ENCODE measurements at regions of chr10 and their contacts with region 1.

Region 1: DNA sequence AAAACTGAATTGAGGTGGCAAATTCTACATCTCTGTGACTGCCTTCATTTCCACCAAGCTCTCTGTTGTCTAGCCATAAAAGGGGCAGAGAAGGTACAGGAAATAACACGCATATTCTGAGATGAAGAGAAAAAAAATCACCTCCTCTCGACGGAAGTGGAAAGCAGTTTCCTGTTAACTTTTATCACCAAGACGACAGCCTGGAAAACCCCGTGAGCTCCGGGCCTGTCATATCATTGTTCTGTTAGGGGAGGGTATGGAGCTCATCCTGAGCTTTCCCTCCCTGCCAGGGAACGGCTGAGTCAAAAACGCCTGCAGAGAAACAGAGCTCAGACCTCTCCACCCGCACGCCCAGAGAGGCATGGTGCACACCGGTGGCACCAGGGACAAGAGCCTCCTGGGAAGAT is 200.3 kb downstream of the PRPF18 start:
- DNase-seq: peak; percentile 87 to 94 (median 91)
- H3K4me3 ChIP-seq: peak overlapping the region in 1 of 2 donors; percentile 32
- H3K4me3 Mint-ChIP-seq: peak overlapping the region; percentile 65 to 91 (median 81)
- H3K27ac ChIP-seq: peak overlapping the region; percentile 91
- H3K27ac Mint-ChIP-seq: no peak overlapping the region
- H3K4me1 ChIP-seq: peaks cover 51% of the 10 kb centered on the region
- H3K4me1 Mint-ChIP-seq: peaks cover 10 to 34% (median 25%) of the 10 kb centered on the region in 4 donors
- H3K27me3 ChIP-seq: no peaks in the 10 kb centered on the region
- H3K27me3 Mint-ChIP-seq: no peaks in the 10 kb centered on the region

Region 2: DNA sequence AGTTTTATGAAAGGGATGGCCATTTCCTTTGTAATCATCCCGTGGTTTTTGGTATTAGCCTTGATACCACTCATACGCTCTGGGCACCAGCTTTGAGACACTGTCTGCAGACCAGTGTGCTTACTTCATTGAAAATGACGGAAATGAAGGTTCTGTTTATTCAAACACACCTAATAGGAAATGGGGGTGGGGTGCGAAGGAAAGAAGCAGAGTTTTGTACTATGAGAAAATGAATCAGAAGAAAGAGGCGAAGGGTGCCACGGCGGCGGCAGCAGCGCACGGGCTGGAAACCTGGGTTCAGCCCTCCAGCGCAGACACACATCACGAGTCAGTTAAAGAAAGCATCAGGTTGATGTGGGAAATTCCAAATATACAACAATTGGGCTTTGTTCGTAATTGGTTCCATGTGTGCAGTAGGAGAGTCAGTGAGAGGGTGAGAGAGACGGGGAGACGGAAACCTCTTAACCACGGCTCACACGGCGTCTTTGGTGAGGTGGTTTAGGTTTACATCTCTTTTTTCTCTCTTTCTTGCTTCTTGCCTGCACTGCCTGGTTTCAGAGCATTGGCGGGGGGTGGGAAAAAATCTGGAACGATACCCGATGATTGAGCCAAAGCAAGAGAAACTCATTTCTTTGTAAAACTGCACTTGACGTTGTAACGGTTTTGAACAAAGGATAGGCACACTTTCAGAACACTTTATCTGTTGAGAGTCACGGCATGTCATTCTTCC is 222.5 kb after region 1 on chr10:
- CTCF ChIA-PET with region 1: interaction called, 4 read pairs
- POLR2A ChIA-PET with region 1: interaction called, 16 read pairs
- intact Hi-C with region 1: loop called (anchors 1 kb)
- DNase-seq: peak; percentile 71 to 89 (median 74)
- H3K4me3 ChIP-seq: peak overlapping the region; percentile 26 to 65
- H3K4me3 Mint-ChIP-seq: peak overlapping the region; percentile 81 to 87 (median 85)
- H3K27ac ChIP-seq: peak overlapping the region; percentile 60
- H3K27ac Mint-ChIP-seq: peak overlapping the region; percentile 73 to 96 (median 90)
- H3K4me1 ChIP-seq: peaks cover 31% of the 10 kb centered on the region
- H3K4me1 Mint-ChIP-seq: peaks cover 25 to 56% (median 41%) of the 10 kb centered on the region in 4 donors
- H3K27me3 ChIP-seq: no peaks in the 10 kb centered on the region
- H3K27me3 Mint-ChIP-seq: peaks cover 0 to 1% of the 10 kb centered on the region in 2 donors

Region 3: GRCh38 chr10:14093730-14094484 is 306.9 kb after region 1 on chr10:
- CTCF ChIA-PET with region 1: interaction called, 21 read pairs
- POLR2A ChIA-PET with region 1: interaction called, 4 read pairs
- intact Hi-C with region 1: loop called (anchors 5 kb)
- DNase-seq: peak in 1 of 5 donors; percentile 4
- H3K4me3 ChIP-seq: no peak overlapping the region
- H3K4me3 Mint-ChIP-seq: no peak overlapping the region
- H3K27ac ChIP-seq: no peak overlapping the region
- H3K27ac Mint-ChIP-seq: peak overlapping the region in 1 of 7 donors; percentile 50
- H3K4me1 ChIP-seq: no peaks in the 10 kb centered on the region
- H3K4me1 Mint-ChIP-seq: peaks cover 0 to 6% (median 0%) of the 10 kb centered on the region in 4 donors
- H3K27me3 ChIP-seq: no peaks in the 10 kb centered on the region
- H3K27me3 Mint-ChIP-seq: no peaks in the 10 kb centered on the region

Region 4: GRCh38 chr10:14195433-14195832 is 408.4 kb after region 1 on chr10:
- CTCF ChIA-PET with region 1: interaction called, 10 read pairs
- POLR2A ChIA-PET with region 1: no interaction called
- intact Hi-C with region 1: no loop called
- DNase-seq: no peak
- H3K4me3 ChIP-seq: no peak overlapping the region
- H3K4me3 Mint-ChIP-seq: no peak overlapping the region
- H3K27ac ChIP-seq: no peak overlapping the region
- H3K27ac Mint-ChIP-seq: no peak overlapping the region
- H3K4me1 ChIP-seq: no peaks in the 10 kb centered on the region
- H3K4me1 Mint-ChIP-seq: no peaks in the 10 kb centered on the region
- H3K27me3 ChIP-seq: no peaks in the 10 kb centered on the region
- H3K27me3 Mint-ChIP-seq: peaks cover 19 to 37% of the 10 kb centered on the region in 2 donors

Region 5: GRCh38 chr10:14878266-14879054 is 1091.4 kb after region 1 on chr10 and contains the start of gene SUV39H2:
- CTCF ChIA-PET with region 1: no interaction called
- POLR2A ChIA-PET with region 1: no interaction called
- intact Hi-C with region 1: loop called (anchors 1 kb)
- DNase-seq: peak; percentile 87 to 91 (median 90)
- H3K4me3 ChIP-seq: peak within 1 kb of the TSS; percentile 44 to 88
- H3K4me3 Mint-ChIP-seq: peak within 1 kb of the TSS; percentile 93 to 96 (median 94)
- H3K27ac ChIP-seq: peak within 1 kb of the TSS; percentile 84
- H3K27ac Mint-ChIP-seq: peak within 1 kb of the TSS; percentile 87 to 95 (median 94)
- H3K4me1 ChIP-seq: peaks cover 17% of the 10 kb centered on the region
- H3K4me1 Mint-ChIP-seq: peaks cover 13 to 48% (median 22%) of the 10 kb centered on the region in 4 donors
- H3K27me3 ChIP-seq: no peaks in the 10 kb centered on the region
- H3K27me3 Mint-ChIP-seq: no peaks in the 10 kb centered on the region
- total RNA-seq, gene SUV39H2: 5.0 to 5.7 TPM